ENCODE measurements at regions of chr17 and their contacts with region 1.

Region 1: GRCh38 chr17:14069251-14070021 is at the start of gene COX10:
- DNase-seq: peak; percentile 85
- H3K4me3 Mint-ChIP-seq: peak within 1 kb of the TSS; percentile 97
- H3K27ac Mint-ChIP-seq: peak within 1 kb of the TSS; percentile 94
- H3K4me1 Mint-ChIP-seq: peaks cover 78% of the 10 kb centered on the region
- H3K27me3 Mint-ChIP-seq: no peaks in the 10 kb centered on the region
- total RNA-seq, gene COX10: 40.1 and 41.7 TPM in 2 replicates

Region 2: GRCh38 chr17:13017659-13018459 is 1051.6 kb before region 1 on chr17 and contains the start of gene ELAC2:
- intact Hi-C with region 1: loop called (anchors 1 kb)
- DNase-seq: peak; percentile 97
- H3K4me3 Mint-ChIP-seq: peak within 1 kb of the TSS; percentile 96
- H3K27ac Mint-ChIP-seq: peak within 1 kb of the TSS; percentile 96
- H3K4me1 Mint-ChIP-seq: peaks cover 42% of the 10 kb centered on the region
- H3K27me3 Mint-ChIP-seq: no peaks in the 10 kb centered on the region
- total RNA-seq, gene ELAC2: 96.9 and 98.7 TPM in 2 replicates

Region 3: GRCh38 chr17:14042411-14042810 is 27.0 kb before region 1 on chr17:
- intact Hi-C with region 1: loop called (anchors 1 kb)
- DNase-seq: no peak
- H3K4me3 Mint-ChIP-seq: no peak overlapping the region
- H3K27ac Mint-ChIP-seq: no peak overlapping the region
- H3K4me1 Mint-ChIP-seq: peaks cover 65% of the 10 kb centered on the region
- H3K27me3 Mint-ChIP-seq: no peaks in the 10 kb centered on the region

Region 4: GRCh38 chr17:14080847-14081251 is 11.4 kb after region 1 on chr17:
- intact Hi-C with region 1: loop called (anchors 1 kb)
- DNase-seq: no peak
- H3K4me3 Mint-ChIP-seq: no peak overlapping the region
- H3K27ac Mint-ChIP-seq: peak overlapping the region; percentile 78
- H3K4me1 Mint-ChIP-seq: peaks cover 46% of the 10 kb centered on the region
- H3K27me3 Mint-ChIP-seq: no peaks in the 10 kb centered on the region

Region 5: GRCh38 chr17:14203388-14203787 is 134.0 kb after region 1 on chr17:
- intact Hi-C with region 1: loop called (anchors 1 kb)
- DNase-seq: peak; percentile 32
- H3K4me3 Mint-ChIP-seq: peak overlapping the region; percentile 24
- H3K27ac Mint-ChIP-seq: peak overlapping the region; percentile 85
- H3K4me1 Mint-ChIP-seq: peaks cover 90% of the 10 kb centered on the region
- H3K27me3 Mint-ChIP-seq: no peaks in the 10 kb centered on the region

Measured in activated T-helper 1 cell treated with anti-CD3 and anti-CD28 coated beads, Interleukin-12 subunit alpha, Interleukin-12 subunit beta, Interleukin-2, Interleukin-4 antibody, amounts not matched to agents 30 ng/mL and 10 ng/mL and 1 ng/mL, durations not matched to agents 14 hours and 24 hours and 36 hours (primary cell).